ENCODE measurements at regions of chr2 and their contacts with region 1.

Region 1: GRCh38 chr2:181457121-181457740 is at the start of gene ITGA4:
- DNase-seq: peak; percentile 77 to 89 (median 83)
- ATAC-seq: peak; percentile 92
- H3K4me3 ChIP-seq: peak within 1 kb of the TSS; percentile 91
- H3K4me3 Mint-ChIP-seq: peak within 1 kb of the TSS; percentile 89 to 99 (median 95)
- H3K27ac ChIP-seq: peak within 1 kb of the TSS; percentile 82
- H3K27ac Mint-ChIP-seq: peak within 1 kb of the TSS; percentile 81 to 98 (median 95)
- H3K4me1 ChIP-seq: peaks cover 13 to 24% of the 10 kb centered on the region in 2 donors
- H3K4me1 Mint-ChIP-seq: peaks cover 34 to 65% (median 54%) of the 10 kb centered on the region in 7 donors
- H3K27me3 ChIP-seq: no peaks in the 10 kb centered on the region
- H3K27me3 Mint-ChIP-seq: no peaks in the 10 kb centered on the region
- total RNA-seq, gene ITGA4: 135 to 212 (median 159) TPM

Region 2: DNA sequence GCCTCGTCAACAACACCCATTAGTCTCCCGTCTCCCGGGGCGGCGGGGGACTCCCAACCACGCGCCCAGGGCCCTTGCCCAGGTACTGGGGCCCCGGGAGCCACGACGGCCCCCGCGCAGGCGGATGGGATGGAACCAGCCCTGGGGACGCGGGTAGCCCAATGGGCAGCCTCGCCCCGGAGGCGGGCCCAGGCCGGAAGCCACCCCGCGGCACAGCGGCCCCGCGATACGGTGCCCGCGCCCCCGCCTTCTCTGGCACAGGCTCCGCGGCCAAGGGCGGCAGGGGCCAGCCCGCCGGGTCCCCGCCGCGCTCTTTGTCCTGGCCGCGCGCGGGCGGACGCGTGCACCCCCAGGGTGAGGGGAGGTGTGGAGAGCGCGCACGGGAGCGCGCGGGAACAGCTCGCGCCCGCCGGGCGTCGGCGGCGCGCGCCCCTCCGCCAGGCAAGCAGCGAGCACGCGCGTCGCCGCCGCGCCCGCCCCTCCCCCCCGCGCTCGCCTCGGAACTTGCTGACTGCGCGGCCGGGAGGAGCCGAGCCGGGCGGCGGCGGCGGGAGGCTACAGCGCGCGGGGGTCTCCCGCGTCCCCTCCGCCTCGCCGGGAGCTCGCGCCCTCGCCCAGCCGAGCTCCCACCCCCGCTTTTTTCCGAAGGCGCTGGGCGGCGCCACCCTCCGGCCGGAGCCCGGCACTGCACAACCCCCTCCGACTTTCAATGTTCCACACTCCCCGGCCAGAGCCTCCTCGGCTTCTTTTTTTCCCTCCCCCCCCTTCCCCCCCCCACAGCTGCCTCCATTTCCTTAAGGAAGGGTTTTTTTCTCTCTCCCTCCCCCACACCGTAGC is 476.9 kb before region 1 on chr2 and contains the start of gene UBE2E3:
- CTCF ChIA-PET with region 1: no interaction called
- POLR2A ChIA-PET with region 1: interaction called, 3 read pairs
- intact Hi-C with region 1: loop called (anchors 2 kb)
- DNase-seq: peak; percentile 74 to 85 (median 79)
- ATAC-seq: peak; percentile 87
- H3K4me3 ChIP-seq: peak within 1 kb of the TSS; percentile 67
- H3K4me3 Mint-ChIP-seq: peak within 1 kb of the TSS; percentile 91 to 99 (median 96)
- H3K27ac ChIP-seq: peak within 1 kb of the TSS; percentile 62
- H3K27ac Mint-ChIP-seq: peak within 1 kb of the TSS; percentile 94 to 98 (median 98)
- H3K4me1 ChIP-seq: peaks cover 20 to 26% of the 10 kb centered on the region in 2 donors
- H3K4me1 Mint-ChIP-seq: peaks cover 25 to 51% (median 44%) of the 10 kb centered on the region in 7 donors
- H3K27me3 ChIP-seq: no peaks in the 10 kb centered on the region
- H3K27me3 Mint-ChIP-seq: peaks cover 0 to 46% (median 0%) of the 10 kb centered on the region in 5 donors
- total RNA-seq, gene UBE2E3: 21.7 to 33.4 (median 24.3) TPM

Region 3: GRCh38 chr2:181140414-181140813 is 316.8 kb before region 1 on chr2:
- CTCF ChIA-PET with region 1: interaction called, 3 read pairs
- POLR2A ChIA-PET with region 1: interaction called, 13 read pairs
- intact Hi-C with region 1: loop called (anchors 1 kb)
- DNase-seq: peak in 1 of 9 donors; percentile 29
- ATAC-seq: peak; percentile 30
- H3K4me3 ChIP-seq: peak overlapping the region; percentile 20
- H3K4me3 Mint-ChIP-seq: peak overlapping the region; percentile 31 to 94 (median 86)
- H3K27ac ChIP-seq: peak overlapping the region; percentile 78
- H3K27ac Mint-ChIP-seq: peak overlapping the region; percentile 93 to 100 (median 98)
- H3K4me1 ChIP-seq: peaks cover 46 to 66% of the 10 kb centered on the region in 2 donors
- H3K4me1 Mint-ChIP-seq: peaks cover 33 to 83% (median 75%) of the 10 kb centered on the region in 7 donors
- H3K27me3 ChIP-seq: no peaks in the 10 kb centered on the region
- H3K27me3 Mint-ChIP-seq: no peaks in the 10 kb centered on the region

Region 4: DNA sequence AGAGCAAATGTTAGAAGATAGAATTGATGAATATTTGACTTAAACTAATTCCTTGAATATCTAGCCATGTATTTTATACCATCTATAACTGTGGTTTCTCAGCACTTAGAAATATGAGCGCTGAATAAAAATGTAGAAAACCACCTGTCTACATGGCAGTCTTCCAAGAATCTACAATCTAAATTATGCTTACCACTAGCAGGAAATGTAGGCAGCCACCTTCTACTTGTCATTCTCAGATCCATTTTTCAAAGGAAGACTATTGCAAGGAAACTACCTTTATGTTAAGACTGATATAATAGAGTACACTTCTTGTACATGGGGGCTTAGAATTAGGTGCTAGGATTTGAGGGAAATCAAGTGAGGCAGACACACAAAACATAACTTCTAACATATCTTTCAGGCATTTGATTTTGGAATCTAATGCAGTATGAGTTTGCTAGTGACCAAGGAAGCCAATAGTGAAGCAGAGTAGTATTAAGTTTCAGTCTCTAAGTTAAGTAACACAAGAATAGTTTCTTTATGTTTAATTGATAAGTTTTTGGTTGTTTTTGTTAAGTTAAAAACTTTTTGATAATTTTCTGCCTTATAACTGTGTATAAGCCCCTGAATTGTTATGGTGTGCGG is 175.9 kb before region 1 on chr2:
- CTCF ChIA-PET with region 1: interaction called, 4 read pairs
- POLR2A ChIA-PET with region 1: interaction called, 3 read pairs
- intact Hi-C with region 1: loop called in 1 of 2 experiments (anchors 1 kb)
- DNase-seq: peak in 7 of 9 donors; percentile 47 to 84 (median 70)
- ATAC-seq: peak; percentile 92
- H3K4me3 ChIP-seq: no peak overlapping the region
- H3K4me3 Mint-ChIP-seq: peak overlapping the region in 9 of 10 donors; percentile 10 to 74 (median 62)
- H3K27ac ChIP-seq: peak overlapping the region; percentile 17
- H3K27ac Mint-ChIP-seq: peak overlapping the region; percentile 75 to 95 (median 84)
- H3K4me1 ChIP-seq: peaks cover 18 to 31% of the 10 kb centered on the region in 2 donors
- H3K4me1 Mint-ChIP-seq: peaks cover 24 to 69% (median 58%) of the 10 kb centered on the region in 7 donors
- H3K27me3 ChIP-seq: no peaks in the 10 kb centered on the region
- H3K27me3 Mint-ChIP-seq: no peaks in the 10 kb centered on the region

Region 5: DNA sequence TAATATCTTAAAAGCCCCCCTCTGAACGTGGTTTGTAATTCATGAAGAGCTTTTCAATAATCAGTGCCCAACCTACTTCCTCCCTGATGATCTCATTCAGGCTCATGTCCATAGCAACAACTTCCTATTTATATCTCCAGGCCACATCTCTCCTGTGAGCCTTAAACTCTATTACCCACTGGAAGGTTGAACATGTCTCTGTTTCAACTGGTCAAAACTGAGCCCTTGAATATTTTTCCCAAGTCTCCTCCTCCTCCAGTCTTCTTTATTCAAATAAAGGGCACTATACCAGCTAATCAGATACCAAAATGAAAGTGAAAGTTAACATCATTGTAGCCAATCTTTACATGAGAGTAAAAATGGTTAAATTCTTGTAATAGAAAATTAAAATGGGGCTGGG is 63.8 kb before region 1 on chr2:
- CTCF ChIA-PET with region 1: no interaction called
- POLR2A ChIA-PET with region 1: interaction called, 10 read pairs
- intact Hi-C with region 1: loop called in 1 of 2 experiments (anchors 2 kb)
- DNase-seq: peak in 3 of 9 donors; percentile 8 to 14 (median 12)
- ATAC-seq: peak; percentile 77
- H3K4me3 ChIP-seq: peak overlapping the region; percentile 49
- H3K4me3 Mint-ChIP-seq: peak overlapping the region; percentile 46 to 79 (median 66)
- H3K27ac ChIP-seq: peak overlapping the region; percentile 10
- H3K27ac Mint-ChIP-seq: peak overlapping the region; percentile 38 to 84 (median 69)
- H3K4me1 ChIP-seq: peaks cover 20 to 21% of the 10 kb centered on the region in 2 donors
- H3K4me1 Mint-ChIP-seq: peaks cover 20 to 44% (median 32%) of the 10 kb centered on the region in 7 donors
- H3K27me3 ChIP-seq: no peaks in the 10 kb centered on the region
- H3K27me3 Mint-ChIP-seq: no peaks in the 10 kb centered on the region

Region 6: DNA sequence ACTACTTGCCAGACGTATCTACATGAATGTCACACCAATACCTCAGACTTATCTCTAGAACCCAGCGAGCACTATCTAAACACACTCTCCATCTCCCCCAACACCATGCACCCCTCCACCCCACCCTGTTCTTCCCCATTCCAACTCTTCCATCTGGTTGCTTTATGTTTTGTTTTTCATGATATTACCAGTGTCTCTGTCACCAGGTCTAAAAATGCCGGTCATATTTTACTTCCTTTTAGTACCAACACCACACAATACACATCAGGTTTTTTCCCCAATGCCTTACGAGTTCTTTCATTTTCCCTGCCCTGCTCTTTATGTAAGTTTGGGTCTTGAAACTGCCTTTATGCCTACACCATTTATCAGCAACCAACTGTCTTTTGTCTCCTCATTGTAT is 10.2 kb before region 1 on chr2:
- CTCF ChIA-PET with region 1: interaction called, 3 read pairs
- POLR2A ChIA-PET with region 1: interaction called, 10 read pairs
- intact Hi-C with region 1: loop called in 1 of 2 experiments (anchors 1 kb)
- DNase-seq: no peak
- ATAC-seq: peak; percentile 31
- H3K4me3 ChIP-seq: no peak overlapping the region
- H3K4me3 Mint-ChIP-seq: peak overlapping the region in 3 of 10 donors; percentile 24 to 43 (median 35)
- H3K27ac ChIP-seq: no peak overlapping the region
- H3K27ac Mint-ChIP-seq: peak overlapping the region in 2 of 9 donors; percentile 19 to 62
- H3K4me1 ChIP-seq: no peaks in the 10 kb centered on the region
- H3K4me1 Mint-ChIP-seq: peaks cover 7 to 28% (median 16%) of the 10 kb centered on the region in 7 donors
- H3K27me3 ChIP-seq: no peaks in the 10 kb centered on the region
- H3K27me3 Mint-ChIP-seq: no peaks in the 10 kb centered on the region

Region 7: DNA sequence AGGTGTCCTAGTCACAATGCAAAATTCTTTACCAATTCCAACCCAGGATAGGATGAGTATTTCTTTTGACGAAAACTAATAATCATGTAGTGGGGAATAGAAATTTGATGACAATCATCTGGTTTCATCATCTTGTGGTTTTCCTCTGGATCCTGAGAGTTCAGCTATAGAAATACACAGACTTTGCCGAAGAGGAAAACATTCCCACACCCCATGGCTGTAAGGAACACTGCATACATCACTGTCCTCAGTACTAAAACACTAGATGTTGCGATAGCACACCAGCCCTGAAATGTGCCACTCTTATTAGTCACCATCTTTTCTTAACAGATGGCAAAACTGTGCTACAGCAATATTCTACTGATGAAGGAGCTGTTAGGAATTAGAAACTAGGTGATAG is 170.3 kb after region 1 on chr2:
- CTCF ChIA-PET with region 1: no interaction called
- POLR2A ChIA-PET with region 1: no interaction called
- intact Hi-C with region 1: no loop called
- DNase-seq: no peak
- ATAC-seq: no peak
- H3K4me3 ChIP-seq: no peak overlapping the region
- H3K4me3 Mint-ChIP-seq: no peak overlapping the region
- H3K27ac ChIP-seq: no peak overlapping the region
- H3K27ac Mint-ChIP-seq: no peak overlapping the region
- H3K4me1 ChIP-seq: no peaks in the 10 kb centered on the region
- H3K4me1 Mint-ChIP-seq: no peaks in the 10 kb centered on the region
- H3K27me3 ChIP-seq: peaks cover 0 to 2% of the 10 kb centered on the region in 2 donors
- H3K27me3 Mint-ChIP-seq: peaks cover 15 to 66% (median 25%) of the 10 kb centered on the region in 5 donors

Measured in naive thymus-derived CD4-positive, alpha-beta T cell (primary cell).